A549 (cell line): ENCODE measurements at regions of chr5 and their contacts with region 1.

Region 1: GRCh38 chr5:138077065-138077696 is 6.7 kb upstream of the WNT8A start:
- DNase-seq: peak; percentile 73 to 78
- ATAC-seq: peak; percentile 89 to 92
- H3K4me3 ChIP-seq: no peak overlapping the region
- H3K27ac ChIP-seq: no peak overlapping the region
- H3K4me1 ChIP-seq: no peaks in the 10 kb centered on the region
- CTCF ChIP-seq: peak; percentile 94
- EP300 ChIP-seq: no peak
- POLR2A ChIP-seq: no peak
- RAD21 ChIP-seq: peak; percentile 89 to 93

Region 2: DNA sequence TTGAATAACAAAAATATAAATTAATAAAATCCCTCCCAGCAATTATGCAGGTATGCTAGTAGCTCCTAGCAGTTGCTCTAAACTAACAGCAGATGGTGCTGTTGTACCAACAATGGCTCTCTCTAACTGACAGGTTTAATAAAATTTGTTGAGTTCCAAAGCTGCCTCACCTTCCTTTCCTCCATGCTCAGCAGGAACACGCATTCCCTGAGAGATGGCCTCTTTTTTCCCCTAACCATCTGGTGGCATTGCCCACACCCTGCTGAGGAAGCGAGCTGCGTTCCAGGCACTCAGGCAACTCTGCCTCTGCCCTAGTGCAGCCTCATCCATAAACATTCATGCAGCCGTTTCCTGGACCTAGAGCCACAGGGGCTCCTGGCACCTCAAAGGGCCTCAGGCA is 447.5 kb before region 1 on chr5:
- CTCF ChIA-PET with region 1: interaction called, 12 read pairs
- POLR2A ChIA-PET with region 1: no interaction called
- DNase-seq: peak; percentile 60 to 77
- ATAC-seq: peak; percentile 66 to 92
- H3K4me3 ChIP-seq: no peak overlapping the region
- H3K27ac ChIP-seq: no peak overlapping the region
- H3K4me1 ChIP-seq: no peaks in the 10 kb centered on the region
- CTCF ChIP-seq: peak; percentile 87
- EP300 ChIP-seq: no peak
- POLR2A ChIP-seq: no peak
- RAD21 ChIP-seq: peak; percentile 89 to 91

Region 3: GRCh38 chr5:138065102-138065501 is 12.1 kb before region 1 on chr5:
- CTCF ChIA-PET with region 1: interaction called, 36 read pairs
- POLR2A ChIA-PET with region 1: no interaction called
- DNase-seq: peak in 1 of 2 experiments; percentile 17
- ATAC-seq: peak; percentile 58 to 73; a peak in 4 of 6 replicates
- H3K4me3 ChIP-seq: no peak overlapping the region
- H3K27ac ChIP-seq: no peak overlapping the region
- H3K4me1 ChIP-seq: no peaks in the 10 kb centered on the region
- CTCF ChIP-seq: peak; percentile 29; the same call in 1 of the 3 replicates
- EP300 ChIP-seq: no peak
- POLR2A ChIP-seq: no peak
- RAD21 ChIP-seq: no peak; a peak in 1 of 5 replicates

Region 4: DNA sequence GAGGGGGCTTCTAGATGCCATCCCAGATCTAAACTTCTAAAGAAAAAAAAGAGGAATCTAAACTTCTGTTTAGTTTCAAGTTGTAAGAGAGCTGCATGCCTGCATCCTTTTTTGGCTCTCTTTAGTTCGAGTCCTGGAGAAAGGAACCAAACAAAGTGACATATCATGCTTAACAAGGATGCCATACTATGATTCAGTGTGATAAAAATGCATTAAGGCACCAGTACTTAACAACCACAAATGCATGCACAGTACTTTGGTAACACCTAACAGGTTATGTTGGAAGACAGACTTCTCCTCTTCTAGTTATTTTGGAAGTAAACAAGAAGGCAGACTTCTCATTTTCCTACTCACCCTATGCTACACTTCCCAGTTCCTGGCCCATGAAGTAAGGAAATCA is 34.8 kb after region 1 on chr5:
- CTCF ChIA-PET with region 1: interaction called, 16 read pairs
- POLR2A ChIA-PET with region 1: no interaction called
- DNase-seq: no peak
- ATAC-seq: no peak; a peak in 1 of 6 replicates
- H3K4me3 ChIP-seq: no peak overlapping the region
- H3K27ac ChIP-seq: no peak overlapping the region
- H3K4me1 ChIP-seq: no peaks in the 10 kb centered on the region
- CTCF ChIP-seq: no peak
- EP300 ChIP-seq: no peak
- POLR2A ChIP-seq: no peak
- RAD21 ChIP-seq: no peak

Region 5: GRCh38 chr5:138138949-138139780 is 62.0 kb after region 1 on chr5 and contains the start of gene NME5:
- CTCF ChIA-PET with region 1: interaction called, 291 read pairs
- POLR2A ChIA-PET with region 1: no interaction called
- DNase-seq: no peak
- ATAC-seq: no peak
- H3K4me3 ChIP-seq: no peak within 1 kb of the TSS
- H3K27ac ChIP-seq: no peak within 1 kb of the TSS
- H3K4me1 ChIP-seq: no peaks in the 10 kb centered on the region
- CTCF ChIP-seq: no peak
- EP300 ChIP-seq: no peak
- POLR2A ChIP-seq: no peak
- RAD21 ChIP-seq: no peak
- polyA plus RNA-seq, gene NME5: not detected in 2 replicates